ENCODE measurements at regions of chr11 and their contacts with region 1.

Region 1: DNA sequence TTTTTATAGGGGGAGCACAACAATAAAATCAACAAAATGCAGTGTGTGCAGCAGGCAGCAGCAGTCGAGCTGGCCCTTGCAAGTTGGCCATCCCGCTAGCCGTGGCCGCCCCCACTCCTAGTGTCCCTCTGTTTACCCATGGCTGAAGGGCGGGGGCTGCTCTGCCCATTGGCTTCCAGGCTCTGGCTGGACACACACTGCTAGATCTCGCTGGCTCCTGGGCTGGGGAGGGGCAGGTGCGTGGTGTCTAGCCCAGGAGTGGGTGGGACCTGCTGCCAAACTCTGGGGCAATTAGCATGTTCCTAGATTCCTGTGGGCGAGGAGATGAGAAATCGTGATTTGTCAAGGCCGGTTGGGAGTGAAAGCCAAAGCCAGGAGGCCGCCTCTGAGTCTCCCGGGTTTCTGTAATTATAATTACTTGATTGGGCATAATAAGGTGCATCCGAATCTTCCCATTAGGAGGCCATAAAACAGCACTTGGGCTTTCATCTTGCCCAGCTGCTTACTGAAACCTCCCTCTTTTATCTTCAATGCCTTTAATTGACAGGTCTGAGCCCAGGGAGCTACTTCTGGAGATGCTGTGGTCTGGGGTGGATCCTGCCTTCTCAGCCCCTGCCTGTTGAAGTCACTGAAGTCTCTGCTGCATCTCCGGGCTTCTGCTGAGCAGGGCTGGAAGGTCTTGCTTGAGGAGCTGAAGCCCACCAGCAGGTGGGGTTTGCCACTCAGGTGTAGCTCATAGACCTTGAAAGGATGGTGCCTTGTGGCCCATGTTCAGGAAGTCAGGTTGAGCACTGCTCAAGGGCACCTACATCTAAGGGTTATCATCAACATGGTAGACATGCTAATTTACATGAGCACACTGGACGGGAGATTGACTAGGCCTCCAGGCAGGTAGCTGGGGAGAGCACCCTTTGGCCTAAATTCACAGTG is 44.5 kb upstream of the DKK3 start:
- DNase-seq: no peak
- ATAC-seq: no peak
- H3K4me3 Mint-ChIP-seq: no peak overlapping the region
- H3K27ac Mint-ChIP-seq: no peak overlapping the region
- H3K4me1 Mint-ChIP-seq: no peaks in the 10 kb centered on the region
- H3K27me3 Mint-ChIP-seq: no peaks in the 10 kb centered on the region
- CTCF ChIP-seq: no peak

Region 2: GRCh38 chr11:11667056-11667455 is 385.9 kb before region 1 on chr11:
- CTCF ChIA-PET with region 1: no interaction called
- POLR2A ChIA-PET with region 1: no interaction called
- intact Hi-C with region 1: no loop called
- DNase-seq: no peak
- ATAC-seq: no peak
- H3K4me3 Mint-ChIP-seq: no peak overlapping the region
- H3K27ac Mint-ChIP-seq: no peak overlapping the region
- H3K4me1 Mint-ChIP-seq: no peaks in the 10 kb centered on the region
- H3K27me3 Mint-ChIP-seq: peaks cover 19% of the 10 kb centered on the region
- CTCF ChIP-seq: no peak

Region 3: GRCh38 chr11:12075822-12076821 is 23.2 kb after region 1 on chr11:
- CTCF ChIA-PET with region 1: no interaction called
- POLR2A ChIA-PET with region 1: no interaction called
- intact Hi-C with region 1: no loop called
- DNase-seq: no peak
- ATAC-seq: no peak
- H3K4me3 Mint-ChIP-seq: no peak overlapping the region
- H3K27ac Mint-ChIP-seq: no peak overlapping the region
- H3K4me1 Mint-ChIP-seq: no peaks in the 10 kb centered on the region
- H3K27me3 Mint-ChIP-seq: no peaks in the 10 kb centered on the region
- CTCF ChIP-seq: no peak

Region 4: GRCh38 chr11:12110201-12110713 is 57.3 kb after region 1 on chr11 and contains the start of gene MICAL2:
- CTCF ChIA-PET with region 1: no interaction called
- POLR2A ChIA-PET with region 1: no interaction called
- intact Hi-C with region 1: no loop called
- DNase-seq: peak; percentile 65
- ATAC-seq: peak; percentile 99
- H3K4me3 Mint-ChIP-seq: peak within 1 kb of the TSS; percentile 76
- H3K27ac Mint-ChIP-seq: no peak within 1 kb of the TSS
- H3K4me1 Mint-ChIP-seq: peaks cover 7% of the 10 kb centered on the region
- H3K27me3 Mint-ChIP-seq: peaks cover 27% of the 10 kb centered on the region
- CTCF ChIP-seq: no peak
- total RNA-seq, gene MICAL2: 0.27 and 0.64 TPM in 2 replicates

Region 5: GRCh38 chr11:12235947-12236743 is 183.2 kb after region 1 on chr11:
- CTCF ChIA-PET with region 1: interaction called, 19 read pairs
- POLR2A ChIA-PET with region 1: no interaction called
- intact Hi-C with region 1: no loop called
- DNase-seq: no peak
- ATAC-seq: no peak
- H3K4me3 Mint-ChIP-seq: no peak overlapping the region
- H3K27ac Mint-ChIP-seq: no peak overlapping the region
- H3K4me1 Mint-ChIP-seq: peaks cover 8% of the 10 kb centered on the region
- H3K27me3 Mint-ChIP-seq: peaks cover 9% of the 10 kb centered on the region
- CTCF ChIP-seq: peak; percentile 40